GM13976 (cell line): ENCODE measurements at regions of chr11 and their contacts with region 1.

Region 1: GRCh38 chr11:9972989-9973388 is 309.1 kb downstream of the SWAP70 start:
- DNase-seq: peak; percentile 79
- CTCF ChIP-seq: peak; percentile 70

Region 2: GRCh38 chr11:9757809-9758636 is 215.0 kb before region 1 on chr11:
- in situ Hi-C with region 1: loop called (anchors 10 kb)
- DNase-seq: peak; percentile 97
- CTCF ChIP-seq: peak; percentile 91

Region 3: DNA sequence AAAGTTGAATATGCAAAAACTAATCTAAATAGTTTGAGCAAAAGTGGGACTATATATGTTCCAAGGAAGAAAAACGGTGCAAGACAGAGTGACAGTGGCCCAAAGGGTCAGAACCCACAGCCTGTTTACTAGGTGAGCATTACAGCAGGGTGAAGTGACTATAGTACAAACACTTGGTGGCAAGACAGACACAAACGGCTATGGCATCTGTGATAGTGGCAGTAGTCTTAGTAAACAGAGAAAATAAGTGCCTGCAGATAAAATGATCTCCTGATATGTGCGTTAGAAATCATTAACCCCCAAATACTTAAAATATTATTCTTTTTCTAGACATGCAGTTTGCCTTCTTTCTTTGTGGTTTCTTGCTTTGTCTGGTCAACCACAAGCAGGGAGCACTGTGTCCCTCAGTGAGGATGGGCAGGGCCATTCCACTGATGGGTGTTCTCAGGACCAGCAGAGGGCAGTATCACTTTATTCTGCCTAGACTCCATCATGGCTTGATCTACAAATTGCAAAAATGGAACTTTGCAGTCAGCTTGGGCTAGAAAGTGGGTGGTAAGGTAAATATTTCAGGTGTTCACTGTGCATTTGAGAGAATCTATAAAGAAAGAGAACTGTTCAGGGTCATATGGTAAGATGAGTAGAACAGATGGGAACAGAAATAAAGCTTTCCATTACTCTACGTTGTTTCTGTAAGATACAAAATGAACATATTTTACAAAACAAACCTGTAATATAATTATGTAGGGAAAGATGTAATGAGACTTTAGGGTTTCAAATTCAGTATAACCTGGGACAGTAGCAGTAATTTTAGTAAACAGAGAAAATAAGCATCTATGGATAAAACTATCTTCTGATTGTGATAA is 110.9 kb before region 1 on chr11:
- in situ Hi-C with region 1: loop called (anchors 5 kb)
- DNase-seq: peak; percentile 64
- CTCF ChIP-seq: peak; percentile 64

Region 4: GRCh38 chr11:10087186-10087585 is 114.2 kb after region 1 on chr11:
- in situ Hi-C with region 1: no loop called
- DNase-seq: no peak
- CTCF ChIP-seq: no peak

Region 5: DNA sequence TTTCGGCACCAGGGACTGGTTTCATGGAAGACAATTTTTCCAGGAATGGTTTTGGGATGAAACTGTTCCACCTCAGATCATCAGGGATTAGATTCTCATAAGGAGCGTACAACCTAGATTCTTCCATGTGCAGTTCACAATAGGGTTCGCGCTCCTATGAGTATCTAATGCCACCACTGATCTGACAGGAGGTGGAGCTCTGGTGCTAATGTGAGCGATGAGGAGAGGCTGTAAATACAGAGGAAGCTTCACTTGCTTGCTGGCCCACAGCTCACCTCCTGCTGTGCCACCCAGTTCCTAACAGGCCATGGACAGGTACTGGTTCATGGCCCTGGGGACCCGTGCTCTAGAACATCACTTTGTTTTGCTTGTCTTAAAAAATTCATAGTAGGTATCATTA is 440.3 kb after region 1 on chr11:
- in situ Hi-C with region 1: no loop called
- DNase-seq: no peak
- CTCF ChIP-seq: peak; percentile 47